Ovary (tissue), 10 donors: ENCODE measurements at regions of chrX and their contacts with region 1.

Region 1: DNA sequence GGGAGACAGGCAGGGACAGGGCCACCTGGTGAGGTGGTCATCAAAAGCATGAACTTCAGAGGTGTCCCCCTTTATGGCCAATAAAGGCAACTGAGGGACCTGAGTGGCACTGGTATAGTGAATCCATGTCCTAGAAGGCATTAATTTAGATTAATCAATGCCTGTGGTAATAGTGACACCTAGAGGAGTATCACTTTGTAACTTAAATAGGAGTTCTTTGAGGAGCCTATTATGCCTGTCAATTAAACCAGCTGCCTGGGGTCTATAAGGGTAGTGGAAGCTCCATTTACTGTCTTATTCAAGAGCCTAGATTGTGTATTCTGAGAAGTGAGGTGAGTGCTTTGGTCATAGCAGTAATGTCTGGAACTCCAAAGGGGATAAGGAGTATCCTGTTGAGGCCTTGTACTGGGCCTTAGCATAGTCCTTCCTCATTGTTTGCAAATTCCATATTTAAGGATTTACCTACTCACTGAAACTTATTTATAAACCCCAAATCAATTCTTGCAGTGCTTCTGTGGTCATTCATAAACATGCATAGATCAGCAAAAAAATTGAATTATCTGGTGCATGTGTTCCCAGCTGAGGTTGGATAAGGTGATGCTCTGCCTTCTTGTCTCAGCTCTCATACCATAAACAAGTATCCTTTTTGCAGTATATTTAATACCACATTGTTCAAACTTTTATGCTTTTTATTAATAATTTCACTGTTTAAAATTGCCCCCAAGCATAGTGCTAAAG is 213.8 kb upstream of the RADX start:
- DNase-seq: no peak
- H3K4me3 ChIP-seq: no peak overlapping the region
- H3K27ac ChIP-seq: no peak overlapping the region
- H3K4me1 ChIP-seq: no peaks in the 10 kb centered on the region
- H3K27me3 ChIP-seq: no peaks in the 10 kb centered on the region
- CTCF ChIP-seq: peak in 2 of 3 donors; percentile 16 to 31
- EP300 ChIP-seq: no peak
- POLR2A ChIP-seq: no peak

Region 2: DNA sequence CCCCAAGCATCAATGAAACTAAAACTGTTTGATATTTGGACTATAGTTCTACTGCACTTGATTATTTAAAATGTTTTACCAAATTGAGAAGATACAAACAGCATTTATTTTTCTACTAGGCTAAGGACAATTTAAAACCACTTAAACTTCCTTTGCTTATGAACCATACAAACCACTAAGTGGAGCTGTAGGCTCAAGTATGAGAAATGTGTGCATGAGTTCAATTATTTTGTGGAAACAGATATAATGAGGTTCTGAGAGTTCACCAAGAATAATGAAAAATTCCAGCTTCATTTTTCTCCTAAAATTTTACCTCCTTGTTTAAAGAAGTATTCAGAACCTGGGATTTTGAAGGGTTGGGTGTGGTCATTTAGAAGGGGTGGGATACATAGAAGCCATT is 422.6 kb before region 1 on chrX:
- intact Hi-C with region 1: loop called in 2 of 4 experiments (anchors 5 to 10 kb)
- DNase-seq: no peak
- H3K4me3 ChIP-seq: no peak overlapping the region
- H3K27ac ChIP-seq: no peak overlapping the region
- H3K4me1 ChIP-seq: no peaks in the 10 kb centered on the region
- H3K27me3 ChIP-seq: no peaks in the 10 kb centered on the region
- CTCF ChIP-seq: peak in 2 of 3 donors; percentile 34 to 42
- EP300 ChIP-seq: no peak
- POLR2A ChIP-seq: no peak

Region 3: GRCh38 chrX:106039920-106040319 is 358.1 kb before region 1 on chrX:
- intact Hi-C with region 1: loop called in 1 of 4 experiments (anchors 5 kb)
- DNase-seq: peak in 1 of 5 donors; percentile 8
- H3K4me3 ChIP-seq: no peak overlapping the region
- H3K27ac ChIP-seq: no peak overlapping the region
- H3K4me1 ChIP-seq: no peaks in the 10 kb centered on the region
- H3K27me3 ChIP-seq: no peaks in the 10 kb centered on the region
- CTCF ChIP-seq: no peak
- EP300 ChIP-seq: no peak
- POLR2A ChIP-seq: no peak